Stomach (tissue), 19 donors: ENCODE measurements at regions of chr4 and their contacts with region 1.

Region 1: GRCh38 chr4:4488405-4489404 is 53.1 kb downstream of the STX18 start:
- DNase-seq: peak; percentile 78 to 91
- H3K4me3 ChIP-seq: no peak overlapping the region
- H3K27ac ChIP-seq: no peak overlapping the region
- H3K4me1 ChIP-seq: peaks cover 0 to 59% (median 20%) of the 10 kb centered on the region in 4 donors
- H3K27me3 ChIP-seq: no peaks in the 10 kb centered on the region
- CTCF ChIP-seq: peak in 5 of 7 experiments; percentile 75 to 82 (median 75)
- EP300 ChIP-seq: no peak
- POLR2A ChIP-seq: no peak

Region 2: DNA sequence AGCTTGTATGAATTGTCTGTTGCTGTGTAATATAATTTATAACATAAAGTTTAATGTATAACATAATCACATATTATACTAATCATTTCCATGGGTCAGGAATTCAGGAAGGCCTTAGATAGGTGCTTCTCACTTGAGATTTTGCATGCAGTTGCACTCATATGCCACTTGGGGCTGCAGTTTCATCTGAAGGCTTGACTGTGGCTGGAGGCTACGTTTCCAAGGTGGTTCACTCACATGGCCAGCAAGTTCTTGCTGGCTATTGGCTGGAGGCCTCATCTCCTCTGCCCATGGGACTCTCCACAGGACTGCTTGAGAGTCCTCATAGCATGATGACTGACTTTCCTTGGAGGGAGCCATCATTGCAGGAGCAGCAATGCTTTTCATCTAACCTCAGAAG is 106.5 kb after region 1 on chr4:
- intact Hi-C with region 1: no loop called
- DNase-seq: no peak
- H3K4me3 ChIP-seq: no peak overlapping the region
- H3K27ac ChIP-seq: no peak overlapping the region
- H3K4me1 ChIP-seq: no peaks in the 10 kb centered on the region
- H3K27me3 ChIP-seq: no peaks in the 10 kb centered on the region
- CTCF ChIP-seq: no peak
- EP300 ChIP-seq: no peak
- POLR2A ChIP-seq: no peak

Region 3: GRCh38 chr4:4631150-4631549 is 142.4 kb after region 1 on chr4:
- intact Hi-C with region 1: no loop called
- DNase-seq: no peak
- H3K4me3 ChIP-seq: no peak overlapping the region
- H3K27ac ChIP-seq: no peak overlapping the region
- H3K4me1 ChIP-seq: no peaks in the 10 kb centered on the region
- H3K27me3 ChIP-seq: no peaks in the 10 kb centered on the region
- CTCF ChIP-seq: no peak
- EP300 ChIP-seq: no peak
- POLR2A ChIP-seq: no peak

Region 4: DNA sequence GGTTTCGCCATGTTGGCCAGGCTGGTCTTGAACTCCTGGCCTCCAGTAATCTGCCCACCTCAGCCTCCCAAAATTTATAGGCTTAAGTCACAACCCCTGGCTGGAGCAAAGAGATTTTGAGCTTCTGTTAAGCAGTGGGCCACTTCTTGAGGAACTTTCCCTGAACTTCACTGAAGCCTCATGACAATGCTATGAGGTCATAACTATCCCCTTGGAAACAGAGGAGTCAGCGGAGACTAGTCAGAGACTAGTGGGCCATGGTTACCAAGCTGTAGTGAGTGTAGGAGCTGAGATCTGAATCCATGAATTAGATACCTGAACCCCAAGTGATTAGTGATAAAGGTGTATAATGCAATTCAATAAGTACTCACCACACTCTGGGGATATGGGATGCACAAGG is 225.6 kb after region 1 on chr4:
- intact Hi-C with region 1: no loop called
- DNase-seq: no peak
- H3K4me3 ChIP-seq: no peak overlapping the region
- H3K27ac ChIP-seq: no peak overlapping the region
- H3K4me1 ChIP-seq: no peaks in the 10 kb centered on the region
- H3K27me3 ChIP-seq: no peaks in the 10 kb centered on the region
- CTCF ChIP-seq: no peak
- EP300 ChIP-seq: no peak
- POLR2A ChIP-seq: no peak

Region 5: DNA sequence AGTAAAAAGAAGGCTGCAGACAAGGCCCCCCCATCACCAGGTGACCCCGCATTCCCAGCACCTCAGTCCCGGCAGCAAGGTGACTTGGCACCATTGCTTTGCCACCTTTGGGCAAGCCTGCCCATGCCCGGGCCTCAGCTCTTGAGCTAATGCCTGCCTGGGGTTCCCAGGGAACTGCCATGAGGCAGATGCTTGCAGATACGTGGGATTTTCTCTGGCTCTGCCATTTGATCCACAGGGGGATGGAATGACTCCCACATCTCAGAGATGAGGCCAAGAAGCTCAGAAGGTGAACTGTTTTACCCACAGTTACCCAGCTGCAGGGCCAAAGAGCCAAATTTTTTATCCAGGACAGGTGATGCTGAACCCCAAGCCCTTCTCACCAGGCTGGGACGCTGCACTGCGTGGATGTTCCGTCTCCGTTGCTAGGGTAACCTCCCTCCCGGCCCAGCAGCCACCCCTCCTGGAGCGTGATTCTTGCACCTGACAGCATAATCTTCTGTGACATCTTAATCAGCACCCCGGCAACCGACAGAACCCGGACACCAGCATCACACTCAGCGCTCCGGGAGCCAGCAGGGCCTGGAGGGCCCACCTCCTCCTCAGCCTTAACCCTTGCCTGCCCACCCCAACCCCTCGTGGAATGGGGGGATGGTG is 355.1 kb after region 1 on chr4:
- intact Hi-C with region 1: loop called (anchors 10 kb)
- DNase-seq: no peak
- H3K4me3 ChIP-seq: no peak overlapping the region
- H3K27ac ChIP-seq: no peak overlapping the region
- H3K4me1 ChIP-seq: no peaks in the 10 kb centered on the region
- H3K27me3 ChIP-seq: peaks cover 0 to 88% (median 30%) of the 10 kb centered on the region in 3 donors
- CTCF ChIP-seq: no peak
- EP300 ChIP-seq: no peak
- POLR2A ChIP-seq: no peak